ENCODE measurements at regions of chr20 and their contacts with region 1.

Region 1: DNA sequence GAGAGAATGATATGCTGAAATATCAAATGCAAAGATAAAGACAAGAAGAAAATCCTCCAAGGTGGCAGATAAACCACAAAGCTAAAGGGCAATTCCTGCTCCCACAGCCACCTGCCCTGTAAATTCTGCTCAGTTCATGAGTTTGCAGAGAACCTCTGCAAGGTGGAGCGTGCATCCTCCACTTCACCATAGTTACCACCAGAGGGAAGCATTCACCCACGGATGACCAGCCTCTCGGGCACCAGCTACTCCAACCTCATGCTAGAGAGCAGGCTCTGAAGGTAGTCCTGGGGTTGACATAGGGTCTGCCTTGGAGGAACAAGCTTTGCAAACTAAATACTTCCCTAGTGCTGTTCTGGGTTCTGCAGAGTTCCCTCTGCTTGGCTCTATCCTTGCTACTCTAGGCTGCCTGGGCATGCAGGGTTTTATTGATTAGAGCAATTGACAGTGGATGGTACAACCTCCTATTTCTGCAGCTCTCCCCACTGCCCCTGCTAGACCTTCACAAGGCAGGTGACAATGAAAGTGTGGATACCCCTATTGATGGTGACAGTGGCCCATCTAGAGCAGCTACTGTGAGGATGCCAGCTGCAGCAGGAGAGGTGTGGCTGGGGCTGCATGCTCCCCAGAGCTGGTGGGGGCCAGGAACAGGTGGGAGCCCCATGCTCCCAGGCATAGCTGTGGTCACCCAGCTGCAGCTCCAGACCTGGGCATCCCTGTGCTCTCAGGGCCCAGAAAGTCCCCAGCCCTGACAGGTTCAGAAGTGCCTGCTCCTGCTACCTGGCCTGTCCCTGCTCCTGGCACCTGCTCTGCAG is 51.1 kb downstream of the GGTLC1 start:
- DNase-seq: peak in 5 of 6 donors; percentile 41 to 79 (median 58)
- ATAC-seq: peak; percentile 93 to 100 (median 98)
- H3K4me3 ChIP-seq: no peak overlapping the region
- H3K27ac ChIP-seq: no peak overlapping the region
- H3K4me1 ChIP-seq: no peaks in the 10 kb centered on the region
- H3K27me3 ChIP-seq: no peaks in the 10 kb centered on the region
- CTCF ChIP-seq: peak; percentile 69 to 87 (median 76)

Region 2: DNA sequence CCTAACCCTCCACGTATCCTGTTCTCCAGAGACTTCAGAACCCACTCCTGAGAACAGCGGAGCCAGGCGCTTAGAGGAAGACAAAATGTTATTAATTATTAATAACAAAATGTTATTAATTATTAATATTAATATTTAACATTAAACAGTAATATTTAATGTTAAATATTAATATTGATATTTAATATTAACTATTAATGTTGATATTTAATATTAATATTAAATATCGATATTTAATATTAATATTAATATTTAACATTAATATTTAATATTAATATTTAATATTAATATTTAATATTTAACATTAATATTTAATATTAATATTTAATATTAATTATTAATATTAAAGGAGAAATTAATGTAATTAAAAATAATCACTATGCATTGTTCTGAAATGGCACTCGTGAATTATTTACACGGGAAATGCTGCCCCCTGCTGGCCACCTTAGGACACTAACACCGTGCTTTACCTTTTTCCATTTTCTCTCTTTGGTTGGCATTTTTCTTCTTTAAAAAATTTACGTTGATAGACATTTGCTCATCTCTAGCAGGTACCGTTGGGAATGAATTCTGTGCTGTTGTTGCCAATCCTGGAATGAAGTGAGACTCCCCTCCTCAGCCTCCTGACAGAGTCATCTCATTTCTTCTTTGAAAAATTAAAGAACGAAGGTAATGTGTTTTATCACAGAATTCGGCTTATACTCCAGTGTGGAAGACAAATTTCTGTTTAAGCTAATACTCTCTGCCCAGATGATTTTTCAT is 58.6 kb after region 1 on chr20:
- intact Hi-C with region 1: loop called in 2 of 3 experiments (anchors 5 to 10 kb)
- DNase-seq: peak in 4 of 6 donors; percentile 24 to 88 (median 62)
- ATAC-seq: peak in 3 of 4 donors; percentile 48 to 66 (median 65)
- H3K4me3 ChIP-seq: no peak overlapping the region
- H3K27ac ChIP-seq: no peak overlapping the region
- H3K4me1 ChIP-seq: no peaks in the 10 kb centered on the region
- H3K27me3 ChIP-seq: peaks cover 0 to 6% (median 4%) of the 10 kb centered on the region in 4 donors
- CTCF ChIP-seq: peak; percentile 66 to 74 (median 72)

Measured in pancreas (tissue), 10 donors.